ENCODE measurements at regions of chr1 and their contacts with region 1.

Region 1: DNA sequence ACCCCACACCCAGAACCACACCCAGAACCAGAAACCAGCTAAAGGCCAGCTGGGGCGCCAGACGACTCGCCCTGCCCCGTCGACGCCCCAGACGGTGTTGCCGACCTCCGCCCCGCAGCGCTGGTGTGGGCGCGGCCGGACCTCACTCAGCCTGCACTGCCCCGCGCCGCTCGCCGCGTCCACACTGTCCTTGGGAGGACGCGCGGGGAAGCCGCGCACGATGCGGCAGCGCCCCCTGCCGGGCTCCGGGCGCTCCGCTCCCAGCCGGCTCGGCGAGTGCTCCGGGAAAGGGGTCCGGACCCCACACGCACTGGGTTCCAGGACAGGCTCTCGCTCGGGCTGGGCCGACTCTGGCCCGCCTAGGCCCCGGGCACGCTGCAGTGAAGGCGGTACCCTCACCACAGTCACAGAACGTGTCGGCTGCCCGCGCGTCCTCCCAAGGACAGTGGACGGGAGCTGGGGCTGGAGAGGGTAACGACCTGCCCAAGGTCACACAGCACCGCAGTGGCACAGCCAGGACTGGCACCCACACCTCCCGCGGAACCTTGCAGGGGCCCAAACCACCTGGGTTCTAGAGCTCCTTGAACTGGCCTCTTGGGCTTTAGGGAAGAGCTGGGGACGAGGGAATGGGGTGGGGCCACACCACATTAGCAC is 90.2 kb downstream of the DMRTA2 start:
- DNase-seq: peak; percentile 46
- H3K4me3 ChIP-seq: peak overlapping the region in 1 of 3 experiments; percentile 30
- H3K27ac ChIP-seq: no peak overlapping the region
- H3K4me1 ChIP-seq: peaks cover 3% of the 10 kb centered on the region
- H3K27me3 ChIP-seq: peaks cover 9 to 10% of the 10 kb centered on the region in 2 experiments
- CTCF ChIP-seq: peak; percentile 91 to 95
- POLR2A ChIP-seq: no peak

Region 2: GRCh38 chr1:48677306-48678287 is 1655.5 kb before region 1 on chr1:
- CTCF ChIA-PET with region 1: interaction called, 63 read pairs
- POLR2A ChIA-PET with region 1: no interaction called
- dilution Hi-C with region 1: no loop called
- intact Hi-C with region 1: loop called (anchors 1 kb)
- DNase-seq: peak; percentile 43
- H3K4me3 ChIP-seq: no peak overlapping the region
- H3K27ac ChIP-seq: no peak overlapping the region
- H3K4me1 ChIP-seq: no peaks in the 10 kb centered on the region
- H3K27me3 ChIP-seq: no peaks in the 10 kb centered on the region
- CTCF ChIP-seq: peak; percentile 53 to 71
- POLR2A ChIP-seq: no peak

Region 3: GRCh38 chr1:48916130-48917069 is 1416.7 kb before region 1 on chr1:
- CTCF ChIA-PET with region 1: interaction called, 9 read pairs
- POLR2A ChIA-PET with region 1: no interaction called
- dilution Hi-C with region 1: no loop called
- intact Hi-C with region 1: loop called (anchors 1 kb)
- DNase-seq: peak; percentile 9
- H3K4me3 ChIP-seq: no peak overlapping the region
- H3K27ac ChIP-seq: no peak overlapping the region
- H3K4me1 ChIP-seq: no peaks in the 10 kb centered on the region
- H3K27me3 ChIP-seq: no peaks in the 10 kb centered on the region
- CTCF ChIP-seq: peak; percentile 24 to 36
- POLR2A ChIP-seq: no peak

Region 4: DNA sequence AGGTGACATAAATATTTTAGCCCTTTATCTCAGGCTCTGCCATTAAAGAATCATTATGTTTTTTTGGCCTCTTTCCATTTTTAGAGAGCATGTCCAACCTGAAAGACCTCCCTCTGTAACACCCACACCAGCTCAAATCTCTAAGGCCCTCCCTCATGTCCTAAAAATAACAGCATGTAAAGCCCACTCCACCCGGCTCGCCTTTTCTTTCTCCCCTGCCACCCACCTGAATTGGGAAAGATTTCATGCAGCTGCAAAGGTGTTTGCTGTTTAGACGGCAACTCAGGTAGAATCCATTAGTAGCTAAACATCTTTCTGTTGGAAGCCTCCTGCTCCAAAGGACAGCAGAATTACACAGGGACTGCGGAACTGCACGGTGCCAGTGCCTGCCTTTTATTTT is 10.3 kb after region 1 on chr1:
- CTCF ChIA-PET with region 1: interaction called, 21 read pairs
- POLR2A ChIA-PET with region 1: no interaction called
- dilution Hi-C with region 1: no loop called
- intact Hi-C with region 1: loop called (anchors 1 kb)
- DNase-seq: no peak
- H3K4me3 ChIP-seq: no peak overlapping the region
- H3K27ac ChIP-seq: no peak overlapping the region
- H3K4me1 ChIP-seq: no peaks in the 10 kb centered on the region
- H3K27me3 ChIP-seq: peaks cover 2% of the 10 kb centered on the region in 2 experiments
- CTCF ChIP-seq: no peak
- POLR2A ChIP-seq: no peak

Region 5: DNA sequence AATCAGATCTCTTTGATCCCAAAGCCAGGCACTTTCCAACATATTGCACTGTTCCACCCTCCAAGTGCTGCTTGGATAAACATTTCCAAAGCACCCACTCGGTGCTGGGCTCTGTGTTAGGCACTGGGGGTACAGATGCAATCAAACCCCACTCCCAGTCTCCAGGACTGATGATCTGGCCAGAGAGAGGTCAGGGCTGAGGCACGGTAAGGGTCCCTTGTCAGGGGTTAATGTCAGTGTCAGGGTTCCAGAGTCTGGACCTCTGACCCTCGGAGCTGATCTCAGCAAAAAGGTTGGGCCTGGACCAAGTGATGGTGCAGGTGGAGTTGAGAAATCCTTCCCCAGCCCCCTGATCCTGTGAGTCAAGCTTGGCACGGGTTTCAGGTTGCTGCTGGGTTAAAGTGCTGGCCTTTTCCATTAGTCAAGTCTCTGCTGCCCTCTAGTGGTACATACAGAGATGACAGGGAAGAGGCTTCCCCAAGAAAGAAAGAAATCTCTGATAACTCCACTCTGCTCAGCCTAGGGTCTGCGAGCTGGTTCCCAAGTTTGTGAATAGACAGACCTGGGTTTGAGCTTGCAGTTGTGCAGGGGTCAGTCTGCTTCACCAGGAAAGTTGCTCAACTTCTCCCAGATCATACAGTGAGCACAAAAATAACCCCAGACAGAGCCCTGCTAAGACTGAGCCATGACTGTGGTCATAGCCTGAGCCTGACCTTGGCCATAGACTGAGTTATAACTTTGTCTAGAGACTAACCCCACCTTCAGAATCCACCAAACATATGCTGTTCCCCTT is 15.6 kb after region 1 on chr1:
- CTCF ChIA-PET with region 1: interaction called, 21 read pairs
- POLR2A ChIA-PET with region 1: no interaction called
- dilution Hi-C with region 1: no loop called
- intact Hi-C with region 1: loop called (anchors 1 kb)
- DNase-seq: peak; percentile 63
- H3K4me3 ChIP-seq: no peak overlapping the region
- H3K27ac ChIP-seq: no peak overlapping the region
- H3K4me1 ChIP-seq: peaks cover 3% of the 10 kb centered on the region
- H3K27me3 ChIP-seq: no peaks in the 10 kb centered on the region
- CTCF ChIP-seq: peak; percentile 79 to 82
- POLR2A ChIP-seq: no peak

Region 6: GRCh38 chr1:50527249-50527986 is 194.3 kb after region 1 on chr1:
- CTCF ChIA-PET with region 1: no interaction called
- POLR2A ChIA-PET with region 1: no interaction called
- dilution Hi-C with region 1: no loop called
- intact Hi-C with region 1: no loop called
- DNase-seq: no peak
- H3K4me3 ChIP-seq: no peak overlapping the region
- H3K27ac ChIP-seq: no peak overlapping the region
- H3K4me1 ChIP-seq: no peaks in the 10 kb centered on the region
- H3K27me3 ChIP-seq: no peaks in the 10 kb centered on the region
- CTCF ChIP-seq: no peak
- POLR2A ChIP-seq: no peak